Naive thymus-derived CD8-positive, alpha-beta T cell (primary cell): ENCODE measurements at regions of chr16 and their contacts with region 1.

Region 1: GRCh38 chr16:3234543-3235541 is at the start of gene ZNF200:
- DNase-seq: peak; percentile 85 to 99 (median 92)
- ATAC-seq: peak; percentile 92 to 94
- H3K4me3 Mint-ChIP-seq: peak within 1 kb of the TSS; percentile 92 to 99 (median 95)
- H3K27ac Mint-ChIP-seq: peak within 1 kb of the TSS; percentile 90 to 99 (median 98)
- H3K4me1 Mint-ChIP-seq: peaks cover 18 to 39% (median 34%) of the 10 kb centered on the region in 4 donors
- H3K27me3 Mint-ChIP-seq: no peaks in the 10 kb centered on the region
- polyA plus RNA-seq, gene ZNF200: 6.8 to 14.3 (median 13.9) TPM

Region 2: GRCh38 chr16:3123986-3124886 is 110.6 kb before region 1 on chr16:
- POLR2A ChIA-PET with region 1: no interaction called
- DNase-seq: peak; percentile 94 to 99 (median 97)
- ATAC-seq: peak; percentile 87 to 88
- H3K4me3 Mint-ChIP-seq: peak overlapping the region; percentile 94 to 98 (median 96)
- H3K27ac Mint-ChIP-seq: peak overlapping the region; percentile 91 to 99 (median 97)
- H3K4me1 Mint-ChIP-seq: peaks cover 20 to 55% (median 43%) of the 10 kb centered on the region in 4 donors
- H3K27me3 Mint-ChIP-seq: no peaks in the 10 kb centered on the region

Region 3: DNA sequence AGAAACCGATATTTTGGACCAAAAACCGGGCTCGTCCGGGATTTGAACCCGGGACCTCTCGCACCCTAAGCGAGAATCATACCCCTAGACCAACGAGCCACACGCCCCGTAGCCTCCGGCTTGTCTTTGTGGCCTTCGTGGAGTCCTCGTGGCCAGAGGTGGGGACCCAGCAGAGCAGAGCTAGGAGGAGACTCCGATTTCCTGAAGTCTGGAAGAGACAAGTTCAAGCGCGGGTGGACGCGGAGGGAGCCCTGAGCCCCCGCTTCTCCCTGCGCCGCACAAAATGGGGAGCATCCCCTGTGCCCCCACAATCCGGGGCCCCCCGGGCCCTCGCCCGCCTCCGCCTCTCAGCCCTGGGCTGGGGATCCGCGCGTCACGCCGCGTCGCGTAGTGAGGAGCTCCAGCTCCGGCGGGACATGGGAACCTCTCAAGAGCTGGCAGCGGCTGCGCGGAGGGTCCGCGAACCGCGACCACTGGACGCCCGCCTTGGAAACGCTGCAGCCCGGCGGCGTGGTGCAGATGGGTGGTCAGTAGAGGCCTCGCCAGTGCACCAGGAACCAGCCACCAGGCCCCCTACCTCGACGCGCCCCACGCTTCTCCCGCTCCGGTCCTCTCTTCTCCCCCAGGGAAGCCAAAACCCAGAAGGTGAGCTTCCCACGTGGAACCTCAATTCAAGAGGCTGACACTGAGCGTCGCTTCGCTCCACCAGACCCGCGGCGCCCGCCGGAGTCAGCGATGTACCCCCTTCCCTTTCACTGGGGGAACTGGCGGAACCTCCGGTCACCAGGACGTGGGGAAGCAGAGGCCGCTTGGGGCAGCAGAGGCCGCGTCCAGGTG is 52.0 kb before region 1 on chr16:
- POLR2A ChIA-PET with region 1: interaction called, 22 read pairs
- DNase-seq: peak in 6 of 10 donors; percentile 15 to 79 (median 40)
- ATAC-seq: peak; percentile 50 to 65
- H3K4me3 Mint-ChIP-seq: peak overlapping the region; percentile 70 to 90 (median 84)
- H3K27ac Mint-ChIP-seq: peak overlapping the region in 5 of 10 donors; percentile 24 to 85 (median 73)
- H3K4me1 Mint-ChIP-seq: peaks cover 18 to 32% (median 25%) of the 10 kb centered on the region in 4 donors
- H3K27me3 Mint-ChIP-seq: peaks cover 38 to 83% (median 69%) of the 10 kb centered on the region in 5 donors

Region 4: GRCh38 chr16:3317315-3317999 is 82.6 kb after region 1 on chr16:
- POLR2A ChIA-PET with region 1: no interaction called
- DNase-seq: no peak
- ATAC-seq: no peak
- H3K4me3 Mint-ChIP-seq: peak overlapping the region in 1 of 10 donors; percentile 14
- H3K27ac Mint-ChIP-seq: peak overlapping the region in 1 of 10 donors; percentile 31
- H3K4me1 Mint-ChIP-seq: peaks cover 0 to 3% (median 1%) of the 10 kb centered on the region in 4 donors
- H3K27me3 Mint-ChIP-seq: no peaks in the 10 kb centered on the region